Endothelial cell of umbilical vein (primary cell): ENCODE measurements at regions of chr3 and their contacts with region 1.

Region 1: GRCh38 chr3:160027541-160028195 is 39.0 kb downstream of the IL12A start:
- DNase-seq: peak; percentile 19
- H3K4me3 ChIP-seq: no peak overlapping the region
- H3K27ac ChIP-seq: no peak overlapping the region
- H3K4me1 ChIP-seq: peaks cover 4% of the 10 kb centered on the region
- H3K27me3 ChIP-seq: no peaks in the 10 kb centered on the region
- CTCF ChIP-seq: no peak
- POLR2A ChIP-seq: no peak

Region 2: GRCh38 chr3:160003520-160004128 is 24.0 kb before region 1 on chr3:
- CTCF ChIA-PET with region 1: interaction called, 14 read pairs
- POLR2A ChIA-PET with region 1: no interaction called
- dilution Hi-C with region 1: no loop called
- intact Hi-C with region 1: no loop called
- DNase-seq: peak; percentile 68
- H3K4me3 ChIP-seq: no peak overlapping the region
- H3K27ac ChIP-seq: no peak overlapping the region
- H3K4me1 ChIP-seq: no peaks in the 10 kb centered on the region
- H3K27me3 ChIP-seq: no peaks in the 10 kb centered on the region
- CTCF ChIP-seq: peak; percentile 67
- POLR2A ChIP-seq: no peak

Region 3: DNA sequence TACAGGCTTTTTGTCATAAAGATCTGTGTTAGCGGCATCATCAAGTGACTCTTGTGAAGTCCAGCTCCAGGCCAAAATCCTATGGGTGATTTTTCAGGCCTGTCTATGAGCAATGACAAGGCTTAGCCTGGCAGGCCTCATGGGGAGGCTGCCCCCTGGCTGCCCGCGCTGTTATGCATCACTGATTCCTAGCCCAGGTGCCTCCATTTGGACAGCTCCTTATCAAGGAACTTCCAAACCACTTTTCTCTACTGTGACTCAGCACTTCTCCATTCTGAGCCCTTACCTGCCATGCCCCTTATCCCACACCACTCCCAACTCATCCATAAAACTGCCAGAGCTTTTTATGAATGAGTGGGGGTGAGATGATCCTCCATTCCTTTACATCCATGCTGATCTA is 106.1 kb after region 1 on chr3:
- CTCF ChIA-PET with region 1: interaction called, 86 read pairs
- POLR2A ChIA-PET with region 1: no interaction called
- dilution Hi-C with region 1: no loop called
- intact Hi-C with region 1: loop called (anchors 1 kb)
- DNase-seq: peak; percentile 41
- H3K4me3 ChIP-seq: no peak overlapping the region
- H3K27ac ChIP-seq: no peak overlapping the region
- H3K4me1 ChIP-seq: peaks cover 14% of the 10 kb centered on the region
- H3K27me3 ChIP-seq: no peaks in the 10 kb centered on the region
- CTCF ChIP-seq: peak; percentile 38 to 61
- POLR2A ChIP-seq: no peak

Region 4: GRCh38 chr3:160210799-160211221 is 183.1 kb after region 1 on chr3:
- CTCF ChIA-PET with region 1: interaction called, 20 read pairs
- POLR2A ChIA-PET with region 1: no interaction called
- dilution Hi-C with region 1: loop called (anchors 25 kb)
- intact Hi-C with region 1: loop called (anchors 1 kb)
- DNase-seq: peak; percentile 33
- H3K4me3 ChIP-seq: no peak overlapping the region
- H3K27ac ChIP-seq: no peak overlapping the region
- H3K4me1 ChIP-seq: no peaks in the 10 kb centered on the region
- H3K27me3 ChIP-seq: peaks cover 0 to 4% of the 10 kb centered on the region in 2 experiments
- CTCF ChIP-seq: peak in 1 of 2 donors; percentile 22
- POLR2A ChIP-seq: no peak

Region 5: DNA sequence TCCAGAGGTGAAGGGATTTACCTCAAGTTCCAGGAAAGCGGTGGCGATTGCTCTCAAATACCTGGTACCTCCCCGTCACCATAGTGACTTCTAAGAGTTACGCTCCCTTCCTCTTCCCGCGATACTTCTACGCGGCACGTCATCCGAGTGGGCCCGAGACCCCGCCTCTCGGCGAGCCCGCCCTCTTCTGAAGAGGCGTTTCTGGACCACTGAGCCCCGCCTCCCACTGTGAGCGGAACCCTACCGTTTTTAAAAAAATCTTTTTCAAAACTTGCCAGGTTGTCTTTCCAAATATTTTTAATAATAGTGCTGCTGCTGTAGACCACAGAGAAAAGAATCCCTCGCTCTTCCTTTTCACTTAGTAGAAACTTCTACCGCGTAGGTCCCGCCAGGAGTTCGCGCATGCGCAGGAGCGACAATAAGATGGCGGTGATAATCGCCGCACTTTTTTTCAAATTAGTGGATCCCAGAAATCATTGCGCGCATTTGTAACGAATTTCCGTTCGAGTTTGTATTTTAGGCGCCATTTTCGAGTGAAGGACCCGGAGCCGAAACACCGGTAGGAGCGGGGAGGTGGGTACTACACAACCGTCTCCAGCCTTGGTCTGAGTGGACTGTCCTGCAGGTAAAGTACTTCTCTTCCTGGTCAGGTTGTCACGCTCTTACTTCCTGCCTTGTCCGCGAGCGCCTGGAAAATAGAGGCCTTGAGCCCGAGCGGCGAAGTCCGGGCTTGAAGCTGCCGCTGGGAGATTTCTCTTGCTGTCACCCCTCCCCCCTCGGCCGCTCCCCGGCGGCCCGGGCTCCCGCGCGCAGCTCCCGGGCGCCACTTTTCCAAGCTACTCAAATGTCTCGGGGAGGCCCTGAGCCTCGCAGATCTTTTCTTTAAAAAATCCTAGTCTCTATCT is 371.7 kb after region 1 on chr3 and contains the starts of genes IFT80 and SMC4:
- CTCF ChIA-PET with region 1: no interaction called
- POLR2A ChIA-PET with region 1: no interaction called
- dilution Hi-C with region 1: no loop called
- intact Hi-C with region 1: loop called (anchors 5 kb)
- DNase-seq: peak; percentile 97
- H3K4me3 ChIP-seq: peak within 1 kb of the TSS; percentile 77 to 79 (median 78)
- H3K27ac ChIP-seq: peak within 1 kb of the TSS; percentile 76
- H3K4me1 ChIP-seq: peaks cover 16% of the 10 kb centered on the region
- H3K27me3 ChIP-seq: no peaks in the 10 kb centered on the region
- CTCF ChIP-seq: no peak
- POLR2A ChIP-seq: peak; percentile 52
- total RNA-seq, gene IFT80: 21.4 and 22.5 TPM in 2 replicates
- total RNA-seq, gene SMC4: 126 and 153 TPM in 2 replicates

Region 6: DNA sequence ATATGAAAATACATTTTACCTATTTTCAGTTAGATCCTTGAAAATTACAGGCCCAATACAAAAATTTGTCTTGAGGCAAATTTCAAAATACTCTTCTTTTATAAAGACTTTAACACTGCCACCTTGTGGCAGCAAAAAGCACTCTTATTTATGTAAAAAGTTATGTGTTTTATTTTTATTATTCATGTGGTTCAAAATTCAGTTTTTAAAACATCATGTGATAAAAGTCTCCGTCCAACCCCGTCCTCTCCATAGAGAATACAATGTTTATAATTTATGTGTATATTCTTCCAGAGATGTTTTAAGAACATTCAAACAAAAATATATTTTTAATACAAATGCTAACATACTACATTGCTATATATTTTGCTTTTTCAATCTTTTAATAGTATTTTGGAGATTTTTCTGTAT is 458.8 kb after region 1 on chr3:
- CTCF ChIA-PET with region 1: interaction called, 4 read pairs
- POLR2A ChIA-PET with region 1: no interaction called
- dilution Hi-C with region 1: no loop called
- intact Hi-C with region 1: loop called (anchors 1 kb)
- DNase-seq: peak; percentile 44
- H3K4me3 ChIP-seq: no peak overlapping the region
- H3K27ac ChIP-seq: no peak overlapping the region
- H3K4me1 ChIP-seq: peaks cover 5% of the 10 kb centered on the region
- H3K27me3 ChIP-seq: no peaks in the 10 kb centered on the region
- CTCF ChIP-seq: peak; percentile 30 to 36
- POLR2A ChIP-seq: no peak